ENCODE measurements at regions of chr14 and their contacts with region 1.

Region 1: DNA sequence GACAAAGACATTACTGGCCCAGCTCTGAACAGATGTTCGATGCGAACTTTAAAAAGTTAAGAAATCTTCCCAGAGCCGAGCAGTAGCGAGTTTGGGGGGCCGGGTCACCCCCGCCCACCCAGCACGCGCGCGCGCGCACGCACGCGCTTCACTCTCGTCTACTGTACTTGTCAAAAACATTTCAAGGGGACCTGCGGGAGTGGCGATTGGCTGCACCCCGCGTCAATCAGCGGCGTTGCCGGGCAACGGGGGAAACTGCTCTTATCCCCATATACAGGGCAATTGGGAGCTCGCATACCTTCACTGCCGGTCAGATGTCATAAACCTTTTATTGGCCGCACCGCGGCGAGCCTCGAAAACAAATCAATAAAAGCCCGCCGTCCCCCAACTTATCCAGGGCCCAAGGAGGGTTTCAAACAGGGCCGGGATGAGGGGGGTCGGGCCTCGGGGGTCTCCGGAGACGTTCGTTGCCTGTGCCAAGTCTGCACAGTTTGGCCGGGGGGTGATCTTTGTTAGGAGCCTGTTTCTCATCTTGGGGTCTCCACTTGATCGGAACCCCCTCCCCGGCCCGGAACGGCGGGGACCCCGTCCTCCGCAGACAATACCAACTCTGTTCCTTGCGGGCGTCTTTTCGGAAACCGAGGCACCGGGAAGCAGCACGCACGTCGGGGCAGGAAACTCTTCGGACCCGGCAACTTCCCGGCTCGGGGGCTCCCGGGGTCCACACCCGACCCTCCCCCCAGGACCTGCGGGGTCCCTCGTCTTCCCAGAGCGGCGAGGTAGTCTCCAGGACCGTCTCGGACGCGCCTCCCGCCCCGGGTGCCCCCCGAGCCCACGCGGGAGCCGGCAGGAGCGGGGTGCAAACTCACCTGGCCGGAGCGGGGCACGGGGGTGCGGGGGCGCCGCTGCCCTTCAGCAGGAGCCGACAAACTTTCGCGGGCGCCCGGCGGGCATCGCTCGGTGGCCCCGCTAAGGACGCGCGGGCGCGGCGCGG is 734 bp downstream of the FOXN3 start:
- DNase-seq: peak; percentile 97 to 100
- ATAC-seq: peak; percentile 67 to 83 (median 74)
- H3K4me3 ChIP-seq: peak overlapping the region; percentile 97
- H3K4me3 Mint-ChIP-seq: peak overlapping the region; percentile 98
- H3K27ac ChIP-seq: peak overlapping the region; percentile 86
- H3K27ac Mint-ChIP-seq: peak overlapping the region; percentile 93 to 98
- H3K4me1 ChIP-seq: peaks cover 35% of the 10 kb centered on the region
- H3K4me1 Mint-ChIP-seq: peaks cover 61 to 63% of the 10 kb centered on the region in 2 donors
- H3K27me3 ChIP-seq: no peaks in the 10 kb centered on the region
- H3K27me3 Mint-ChIP-seq: no peaks in the 10 kb centered on the region
- CTCF ChIP-seq: no peak

Region 2: DNA sequence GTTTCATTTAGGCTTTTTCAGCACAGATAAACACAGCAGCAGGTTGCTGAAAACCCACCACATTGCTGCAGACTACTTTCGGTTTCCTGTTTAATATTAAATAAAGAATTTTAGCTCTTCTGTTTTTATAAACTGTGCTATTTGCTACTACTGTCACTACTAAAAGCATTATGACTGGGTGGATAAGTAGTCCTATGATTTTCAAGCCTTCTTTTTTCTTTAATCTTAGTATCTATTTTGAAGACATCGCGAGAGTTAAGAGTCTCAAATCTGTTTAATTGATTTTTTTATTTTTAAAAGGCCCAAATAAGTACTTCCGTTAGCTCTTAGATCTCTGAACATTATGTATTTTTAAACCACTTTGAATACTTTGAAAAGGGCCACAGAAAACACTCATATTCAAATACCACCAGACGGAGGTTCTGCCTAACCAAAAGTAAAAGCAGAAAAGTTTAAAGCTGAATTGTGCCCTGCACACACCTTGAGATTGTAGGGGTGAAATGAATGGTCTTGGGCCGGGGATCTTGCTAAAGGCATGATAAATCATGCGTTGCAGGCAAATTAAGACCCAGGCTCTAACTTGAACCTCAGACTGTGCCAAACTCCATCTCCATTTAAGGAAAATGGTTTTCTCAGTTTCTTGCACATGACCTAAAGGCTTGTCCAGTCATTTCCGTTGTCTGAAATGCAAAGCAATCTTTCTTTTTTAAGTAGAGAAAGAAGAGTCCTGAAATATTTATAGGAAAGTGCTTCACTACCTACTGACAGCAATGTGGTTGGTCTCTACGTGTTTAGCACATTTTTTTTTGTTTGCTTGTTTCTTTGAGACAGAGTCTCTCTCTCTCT is 14.3 kb after region 1 on chr14:
- intact Hi-C with region 1: loop called (anchors 1 kb)
- DNase-seq: peak in 1 of 2 donors; percentile 77
- ATAC-seq: peak; percentile 63 to 72 (median 69)
- H3K4me3 ChIP-seq: peak overlapping the region; percentile 46
- H3K4me3 Mint-ChIP-seq: peak overlapping the region; percentile 97
- H3K27ac ChIP-seq: peak overlapping the region; percentile 85
- H3K27ac Mint-ChIP-seq: peak overlapping the region; percentile 96 to 98
- H3K4me1 ChIP-seq: peaks cover 75% of the 10 kb centered on the region
- H3K4me1 Mint-ChIP-seq: peaks cover 53 to 69% of the 10 kb centered on the region in 2 donors
- H3K27me3 ChIP-seq: no peaks in the 10 kb centered on the region
- H3K27me3 Mint-ChIP-seq: no peaks in the 10 kb centered on the region
- CTCF ChIP-seq: no peak

Region 3: GRCh38 chr14:89509891-89510290 is 93.6 kb after region 1 on chr14:
- intact Hi-C with region 1: loop called (anchors 5 kb)
- DNase-seq: no peak
- ATAC-seq: no peak
- H3K4me3 ChIP-seq: no peak overlapping the region
- H3K4me3 Mint-ChIP-seq: peak overlapping the region; percentile 76
- H3K27ac ChIP-seq: peak overlapping the region; percentile 49
- H3K27ac Mint-ChIP-seq: peak overlapping the region; percentile 97
- H3K4me1 ChIP-seq: peaks cover 38% of the 10 kb centered on the region
- H3K4me1 Mint-ChIP-seq: peaks cover 61 to 65% of the 10 kb centered on the region in 2 donors
- H3K27me3 ChIP-seq: no peaks in the 10 kb centered on the region
- H3K27me3 Mint-ChIP-seq: no peaks in the 10 kb centered on the region
- CTCF ChIP-seq: no peak

Region 4: GRCh38 chr14:89701211-89702043 is 285.1 kb after region 1 on chr14:
- intact Hi-C with region 1: loop called (anchors 5 kb)
- DNase-seq: peak; percentile 74 to 89
- ATAC-seq: peak; percentile 90 to 93 (median 92)
- H3K4me3 ChIP-seq: peak overlapping the region; percentile 45
- H3K4me3 Mint-ChIP-seq: peak overlapping the region; percentile 86
- H3K27ac ChIP-seq: peak overlapping the region; percentile 40
- H3K27ac Mint-ChIP-seq: peak overlapping the region; percentile 77 to 86
- H3K4me1 ChIP-seq: peaks cover 19% of the 10 kb centered on the region
- H3K4me1 Mint-ChIP-seq: peaks cover 35 to 40% of the 10 kb centered on the region in 2 donors
- H3K27me3 ChIP-seq: no peaks in the 10 kb centered on the region
- H3K27me3 Mint-ChIP-seq: no peaks in the 10 kb centered on the region
- CTCF ChIP-seq: no peak

Region 5: DNA sequence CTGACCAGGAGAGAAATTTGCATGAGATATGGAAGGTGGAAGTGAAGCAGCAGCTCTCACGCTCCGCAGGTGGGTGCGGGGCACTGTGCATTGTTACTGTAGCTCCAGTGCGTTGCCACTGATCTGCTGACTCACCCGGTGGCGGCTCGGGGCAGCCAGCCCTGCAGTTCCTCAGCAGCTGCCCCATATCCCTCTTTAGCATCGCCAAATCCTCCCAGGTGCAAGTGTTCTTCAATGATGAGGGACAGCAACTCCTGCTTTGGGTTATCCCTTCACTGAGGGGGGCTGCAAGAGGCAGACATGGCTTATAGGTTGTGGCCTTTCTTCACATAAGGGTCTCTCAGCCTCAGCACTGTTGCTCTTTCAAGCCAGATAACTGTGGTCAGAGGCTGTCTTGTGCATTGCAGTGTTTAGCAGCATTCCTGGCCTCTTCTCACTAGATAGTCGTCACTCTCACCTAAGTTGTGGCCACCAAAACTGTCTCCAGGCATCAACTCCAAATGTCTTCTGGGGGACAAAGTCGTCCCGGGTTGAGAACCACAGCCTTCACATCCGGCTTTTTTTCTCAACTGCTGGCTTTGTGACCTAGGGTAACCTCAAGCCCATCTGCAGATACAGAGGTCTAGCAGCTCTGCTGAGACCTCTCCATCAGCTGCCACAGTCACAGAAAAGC is 357.5 kb after region 1 on chr14:
- intact Hi-C with region 1: loop called (anchors 2 kb)
- DNase-seq: peak; percentile 59 to 82
- ATAC-seq: peak; percentile 83 to 93 (median 89)
- H3K4me3 ChIP-seq: no peak overlapping the region
- H3K4me3 Mint-ChIP-seq: peak overlapping the region; percentile 74
- H3K27ac ChIP-seq: peak overlapping the region; percentile 28
- H3K27ac Mint-ChIP-seq: peak overlapping the region; percentile 76 to 83
- H3K4me1 ChIP-seq: peaks cover 27% of the 10 kb centered on the region
- H3K4me1 Mint-ChIP-seq: peaks cover 16 to 17% of the 10 kb centered on the region in 2 donors
- H3K27me3 ChIP-seq: no peaks in the 10 kb centered on the region
- H3K27me3 Mint-ChIP-seq: peaks cover 0 to 7% of the 10 kb centered on the region in 2 donors
- CTCF ChIP-seq: no peak

Region 6: GRCh38 chr14:90399541-90400444 is 983.5 kb after region 1 on chr14:
- intact Hi-C with region 1: loop called (anchors 2 kb)
- DNase-seq: peak; percentile 72 to 94
- ATAC-seq: peak; percentile 50 to 78 (median 52)
- H3K4me3 ChIP-seq: peak overlapping the region; percentile 56
- H3K4me3 Mint-ChIP-seq: peak overlapping the region; percentile 91
- H3K27ac ChIP-seq: peak overlapping the region; percentile 94
- H3K27ac Mint-ChIP-seq: peak overlapping the region; percentile 95 to 96
- H3K4me1 ChIP-seq: peaks cover 47% of the 10 kb centered on the region
- H3K4me1 Mint-ChIP-seq: peaks cover 63 to 66% of the 10 kb centered on the region in 2 donors
- H3K27me3 ChIP-seq: no peaks in the 10 kb centered on the region
- H3K27me3 Mint-ChIP-seq: no peaks in the 10 kb centered on the region
- CTCF ChIP-seq: peak; percentile 100